H1 (cell line): ENCODE measurements at regions of chr15 and their contacts with region 1.

Region 1: GRCh38 chr15:57561041-57561711 is 30.5 kb upstream of the MYZAP start:
- DNase-seq: peak in 1 of 2 experiments; percentile 73
- H3K4me3 ChIP-seq: no peak overlapping the region
- H3K27ac ChIP-seq: no peak overlapping the region
- H3K4me1 ChIP-seq: peaks cover 1 to 4% (median 2%) of the 10 kb centered on the region in 4 experiments; a peak in 3 of 7 replicates
- H3K27me3 ChIP-seq: no peaks in the 10 kb centered on the region
- CTCF ChIP-seq: peak; percentile 68 to 96 (median 87)
- EP300 ChIP-seq: no peak
- POLR2A ChIP-seq: no peak
- RAD21 ChIP-seq: peak; percentile 81 to 88

Region 2: GRCh38 chr15:57485869-57486268 is 75.3 kb before region 1 on chr15:
- CTCF ChIA-PET with region 1: no interaction called
- POLR2A ChIA-PET with region 1: no interaction called
- DNase-seq: peak in 1 of 2 experiments; percentile 68
- H3K4me3 ChIP-seq: no peak overlapping the region
- H3K27ac ChIP-seq: no peak overlapping the region
- H3K4me1 ChIP-seq: peaks cover 0 to 6% (median 2%) of the 10 kb centered on the region in 4 experiments; a peak in 4 of 7 replicates
- H3K27me3 ChIP-seq: no peaks in the 10 kb centered on the region
- CTCF ChIP-seq: no peak
- EP300 ChIP-seq: no peak
- POLR2A ChIP-seq: no peak
- RAD21 ChIP-seq: no peak

Region 3: GRCh38 chr15:57534281-57534680 is 26.9 kb before region 1 on chr15:
- CTCF ChIA-PET with region 1: interaction called, 17 read pairs
- POLR2A ChIA-PET with region 1: no interaction called
- DNase-seq: no peak
- H3K4me3 ChIP-seq: no peak overlapping the region
- H3K27ac ChIP-seq: no peak overlapping the region
- H3K4me1 ChIP-seq: peaks cover 0 to 5% (median 3%) of the 10 kb centered on the region in 4 experiments; a peak in 2 of 7 replicates
- H3K27me3 ChIP-seq: no peaks in the 10 kb centered on the region
- CTCF ChIP-seq: no peak
- EP300 ChIP-seq: no peak
- POLR2A ChIP-seq: no peak
- RAD21 ChIP-seq: no peak

Region 4: DNA sequence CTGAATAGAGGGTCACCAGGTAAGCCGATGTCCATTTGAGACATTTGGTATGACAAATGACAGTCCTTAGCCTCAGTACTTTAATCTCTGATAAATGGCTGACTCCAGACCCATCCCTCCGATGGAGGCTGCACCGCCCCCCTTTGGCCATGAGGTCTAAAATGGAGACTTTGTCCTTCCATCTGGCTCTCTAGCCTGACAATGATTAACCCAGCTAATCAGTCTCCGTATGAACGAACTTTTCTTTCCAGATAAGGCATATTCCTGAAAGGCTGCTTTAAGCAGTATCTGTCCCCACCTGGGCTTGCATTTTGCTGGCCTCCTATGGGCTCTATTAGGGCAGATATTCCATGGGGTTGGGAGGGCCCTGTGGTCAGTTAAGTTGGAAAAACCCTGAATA is 19.7 kb after region 1 on chr15:
- CTCF ChIA-PET with region 1: interaction called, 20 read pairs
- POLR2A ChIA-PET with region 1: no interaction called
- DNase-seq: no peak
- H3K4me3 ChIP-seq: no peak overlapping the region
- H3K27ac ChIP-seq: no peak overlapping the region
- H3K4me1 ChIP-seq: no peaks in the 10 kb centered on the region
- H3K27me3 ChIP-seq: no peaks in the 10 kb centered on the region
- CTCF ChIP-seq: peak in 2 of 3 experiments; percentile 1 to 25; a peak in 1 of 4 replicates
- EP300 ChIP-seq: no peak
- POLR2A ChIP-seq: no peak
- RAD21 ChIP-seq: no peak; a peak in 1 of 4 replicates

Region 5: GRCh38 chr15:57611938-57612337 is 50.8 kb after region 1 on chr15:
- CTCF ChIA-PET with region 1: interaction called, 28 read pairs
- POLR2A ChIA-PET with region 1: no interaction called
- DNase-seq: no peak
- H3K4me3 ChIP-seq: no peak overlapping the region
- H3K27ac ChIP-seq: no peak overlapping the region
- H3K4me1 ChIP-seq: no peaks in the 10 kb centered on the region; a peak in 2 of 7 replicates
- H3K27me3 ChIP-seq: peaks cover 0 to 2% (median 0%) of the 10 kb centered on the region in 4 experiments; a peak in 1 of 7 replicates
- CTCF ChIP-seq: peak; percentile 28 to 61 (median 40)
- EP300 ChIP-seq: no peak
- POLR2A ChIP-seq: no peak
- RAD21 ChIP-seq: peak; percentile 53 to 66

Region 6: GRCh38 chr15:57635300-57635909 is 74.2 kb after region 1 on chr15:
- CTCF ChIA-PET with region 1: interaction called, 25 read pairs
- POLR2A ChIA-PET with region 1: no interaction called
- DNase-seq: no peak
- H3K4me3 ChIP-seq: no peak overlapping the region
- H3K27ac ChIP-seq: no peak overlapping the region
- H3K4me1 ChIP-seq: no peaks in the 10 kb centered on the region
- H3K27me3 ChIP-seq: peaks cover 0 to 3% (median 0%) of the 10 kb centered on the region in 4 experiments; a peak in 1 of 7 replicates
- CTCF ChIP-seq: peak; percentile 2 to 41 (median 36); a peak in 3 of 4 replicates
- EP300 ChIP-seq: no peak
- POLR2A ChIP-seq: no peak
- RAD21 ChIP-seq: peak; percentile 40 to 53